CD4-positive, alpha-beta T cell (primary cell): ENCODE measurements at regions of chr1 and their contacts with region 1.

Region 1: GRCh38 chr1:148334339-148335130 is 148.6 kb downstream of the PPIAL4G start:
- DNase-seq: peak; percentile 52 to 89 (median 66)
- ATAC-seq: peak; percentile 75
- H3K4me3 ChIP-seq: peak overlapping the region; percentile 73
- H3K4me3 Mint-ChIP-seq: peak overlapping the region; percentile 95
- H3K27ac ChIP-seq: peak overlapping the region; percentile 50 to 66
- H3K27ac Mint-ChIP-seq: peak overlapping the region; percentile 96
- H3K4me1 ChIP-seq: peaks cover 16% of the 10 kb centered on the region
- H3K4me1 Mint-ChIP-seq: peaks cover 38% of the 10 kb centered on the region
- H3K27me3 ChIP-seq: peaks cover 6 to 9% of the 10 kb centered on the region in 2 experiments
- H3K27me3 Mint-ChIP-seq: peaks cover 6% of the 10 kb centered on the region
- CTCF ChIP-seq: no peak

Region 2: DNA sequence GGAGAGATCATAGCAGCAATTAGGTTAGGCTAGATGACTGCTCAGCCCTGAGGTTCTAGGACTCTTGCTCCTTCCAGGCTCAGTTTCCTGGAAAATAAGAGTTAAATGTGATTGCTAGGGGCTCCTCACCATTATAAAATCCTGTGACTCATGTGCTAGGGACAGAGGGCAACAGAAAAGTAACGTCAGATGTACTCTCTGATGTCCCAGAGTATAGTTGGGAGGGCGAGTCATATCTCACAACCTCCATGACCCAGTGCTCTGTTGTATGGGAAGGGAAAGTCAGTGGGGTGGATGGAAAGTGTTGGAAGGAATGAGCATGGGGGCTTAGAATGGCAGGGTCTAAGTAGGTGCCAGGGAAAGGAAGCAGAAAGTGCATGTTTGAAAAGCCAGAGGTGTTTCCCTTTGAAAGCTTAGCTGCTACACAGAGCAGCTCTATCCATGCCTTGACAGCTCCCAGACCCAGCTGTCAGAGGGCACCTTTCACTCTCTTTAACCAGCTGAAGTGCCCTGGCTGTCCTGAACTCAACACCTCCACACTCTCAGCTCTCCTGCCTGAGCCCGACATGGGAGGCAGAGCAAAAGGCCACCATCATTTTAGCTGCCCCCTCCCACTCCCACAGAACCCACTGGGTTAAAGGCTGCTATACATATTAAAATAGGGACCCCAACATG is 585.7 kb before region 1 on chr1:
- CTCF ChIA-PET with region 1: no interaction called
- POLR2A ChIA-PET with region 1: no interaction called
- intact Hi-C with region 1: no loop called
- DNase-seq: no peak
- ATAC-seq: no peak
- H3K4me3 ChIP-seq: no peak overlapping the region
- H3K4me3 Mint-ChIP-seq: no peak overlapping the region
- H3K27ac ChIP-seq: no peak overlapping the region
- H3K27ac Mint-ChIP-seq: no peak overlapping the region
- H3K4me1 ChIP-seq: no peaks in the 10 kb centered on the region
- H3K4me1 Mint-ChIP-seq: no peaks in the 10 kb centered on the region
- H3K27me3 ChIP-seq: peaks cover 0 to 7% of the 10 kb centered on the region in 2 experiments
- H3K27me3 Mint-ChIP-seq: no peaks in the 10 kb centered on the region
- CTCF ChIP-seq: no peak

Region 3: GRCh38 chr1:148263128-148263905 is 71.2 kb before region 1 on chr1:
- CTCF ChIA-PET with region 1: no interaction called
- POLR2A ChIA-PET with region 1: interaction called, 30 read pairs
- intact Hi-C with region 1: loop called in 1 of 2 experiments (anchors 5 kb)
- DNase-seq: peak; percentile 24 to 85 (median 43)
- ATAC-seq: peak; percentile 87
- H3K4me3 ChIP-seq: peak overlapping the region; percentile 75
- H3K4me3 Mint-ChIP-seq: peak overlapping the region; percentile 90
- H3K27ac ChIP-seq: peak overlapping the region; percentile 64 to 72
- H3K27ac Mint-ChIP-seq: peak overlapping the region; percentile 87
- H3K4me1 ChIP-seq: peaks cover 12% of the 10 kb centered on the region
- H3K4me1 Mint-ChIP-seq: peaks cover 15% of the 10 kb centered on the region
- H3K27me3 ChIP-seq: no peaks in the 10 kb centered on the region
- H3K27me3 Mint-ChIP-seq: no peaks in the 10 kb centered on the region
- CTCF ChIP-seq: no peak

Region 4: DNA sequence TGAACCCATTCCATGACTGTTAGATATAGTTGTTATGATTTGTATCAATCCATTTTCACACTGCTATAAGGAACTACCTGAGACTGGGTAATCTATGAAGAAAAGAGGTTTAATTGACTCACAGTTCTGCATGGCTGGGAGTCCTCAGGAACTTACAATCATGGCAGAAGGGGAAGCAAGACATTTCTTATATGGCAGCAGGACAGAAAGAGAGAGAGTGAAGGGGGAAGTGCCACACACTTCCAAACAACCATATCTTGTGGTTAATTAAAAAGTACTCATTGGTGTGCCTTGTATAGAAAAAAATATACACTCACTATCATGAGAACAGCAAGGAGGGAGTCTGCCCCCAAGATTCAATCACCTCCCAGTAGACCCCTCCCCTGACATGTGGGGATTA is 44.9 kb before region 1 on chr1:
- CTCF ChIA-PET with region 1: no interaction called
- POLR2A ChIA-PET with region 1: no interaction called
- intact Hi-C with region 1: loop called in 1 of 2 experiments (anchors 5 kb)
- DNase-seq: no peak
- ATAC-seq: no peak
- H3K4me3 ChIP-seq: no peak overlapping the region
- H3K4me3 Mint-ChIP-seq: no peak overlapping the region
- H3K27ac ChIP-seq: no peak overlapping the region
- H3K27ac Mint-ChIP-seq: no peak overlapping the region
- H3K4me1 ChIP-seq: no peaks in the 10 kb centered on the region
- H3K4me1 Mint-ChIP-seq: no peaks in the 10 kb centered on the region
- H3K27me3 ChIP-seq: peaks cover 0 to 5% of the 10 kb centered on the region in 2 experiments
- H3K27me3 Mint-ChIP-seq: peaks cover 9% of the 10 kb centered on the region
- CTCF ChIP-seq: no peak

Region 5: DNA sequence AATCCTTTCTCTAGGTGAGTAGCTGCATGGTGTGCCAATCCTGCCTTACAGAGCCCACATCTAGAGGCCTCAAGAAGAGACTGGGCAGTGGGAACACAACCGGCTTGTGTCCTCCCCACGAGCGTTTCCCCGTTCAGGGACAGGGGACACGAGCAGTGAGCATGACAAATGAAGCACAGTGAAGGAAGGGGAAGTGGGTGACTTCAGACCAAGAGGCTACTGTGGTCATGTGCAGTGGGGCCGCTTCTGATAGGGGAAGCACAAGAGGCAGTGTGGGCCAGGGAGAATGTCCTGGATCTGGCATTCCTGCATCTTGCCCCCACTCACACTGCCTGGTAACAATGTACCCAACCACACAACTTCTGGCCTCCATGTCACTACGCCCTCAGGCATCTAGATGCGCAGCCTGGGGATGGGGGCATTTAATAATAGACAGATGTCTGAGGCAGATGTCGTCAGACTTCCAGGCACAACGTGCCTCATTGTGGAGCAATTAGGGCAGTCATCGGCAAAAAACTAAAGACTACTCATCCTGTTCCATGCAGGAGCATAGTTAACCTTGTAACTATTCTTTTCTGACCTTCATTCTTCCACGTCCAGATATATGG is 26.8 kb before region 1 on chr1:
- CTCF ChIA-PET with region 1: interaction called, 3 read pairs
- POLR2A ChIA-PET with region 1: interaction called, 14 read pairs
- intact Hi-C with region 1: no loop called
- DNase-seq: peak in 2 of 14 experiments; percentile 50 to 51
- ATAC-seq: no peak
- H3K4me3 ChIP-seq: no peak overlapping the region
- H3K4me3 Mint-ChIP-seq: no peak overlapping the region
- H3K27ac ChIP-seq: no peak overlapping the region
- H3K27ac Mint-ChIP-seq: no peak overlapping the region
- H3K4me1 ChIP-seq: peaks cover 8% of the 10 kb centered on the region
- H3K4me1 Mint-ChIP-seq: peaks cover 17% of the 10 kb centered on the region
- H3K27me3 ChIP-seq: peaks cover 40 to 65% of the 10 kb centered on the region in 2 experiments
- H3K27me3 Mint-ChIP-seq: peaks cover 88% of the 10 kb centered on the region
- CTCF ChIP-seq: no peak

Region 6: DNA sequence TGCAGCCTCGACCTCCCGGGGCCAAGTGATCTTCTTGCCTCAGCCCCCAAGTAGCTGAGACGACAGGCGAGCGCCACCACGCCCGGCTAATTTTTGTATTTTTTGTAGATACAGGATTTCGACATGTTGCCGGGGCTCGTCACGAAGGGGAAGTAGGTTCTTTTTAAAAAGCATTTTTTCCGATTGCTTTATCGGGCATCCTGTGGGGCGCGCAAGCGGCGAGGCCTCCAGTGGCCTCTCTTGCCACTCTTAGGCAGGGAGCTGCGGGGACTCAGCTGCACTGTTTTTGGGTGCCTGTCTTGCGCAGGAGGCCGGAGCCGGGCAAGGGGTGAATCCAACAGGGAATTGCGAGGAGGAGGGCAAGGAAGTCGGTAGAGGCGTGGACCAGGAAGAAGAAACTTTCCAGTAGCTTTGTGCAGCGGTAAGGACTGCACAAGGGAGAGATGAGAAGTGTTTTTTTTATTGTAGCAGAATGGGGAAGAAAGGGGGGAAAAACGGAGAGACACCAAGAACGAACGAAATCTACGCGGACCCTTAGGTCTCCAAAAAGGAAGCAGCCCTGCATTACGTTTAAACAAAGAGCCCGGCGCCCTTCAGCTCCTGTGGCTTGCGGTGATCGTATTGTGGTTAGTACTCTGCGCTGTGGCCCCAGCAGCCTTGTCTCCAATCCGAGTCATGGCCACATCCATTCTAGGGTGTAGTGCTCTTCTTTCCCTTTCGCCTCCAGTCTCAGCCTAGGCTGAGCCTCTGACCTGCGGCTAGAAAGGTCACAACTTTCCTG is 16.2 kb before region 1 on chr1:
- CTCF ChIA-PET with region 1: interaction called, 3 read pairs
- POLR2A ChIA-PET with region 1: interaction called, 32 read pairs
- intact Hi-C with region 1: no loop called
- DNase-seq: peak; percentile 25 to 79 (median 40)
- ATAC-seq: peak; percentile 85
- H3K4me3 ChIP-seq: peak overlapping the region; percentile 67
- H3K4me3 Mint-ChIP-seq: peak overlapping the region; percentile 94
- H3K27ac ChIP-seq: no peak overlapping the region
- H3K27ac Mint-ChIP-seq: peak overlapping the region; percentile 29
- H3K4me1 ChIP-seq: peaks cover 16% of the 10 kb centered on the region
- H3K4me1 Mint-ChIP-seq: peaks cover 22% of the 10 kb centered on the region
- H3K27me3 ChIP-seq: peaks cover 0 to 6% of the 10 kb centered on the region in 2 experiments
- H3K27me3 Mint-ChIP-seq: peaks cover 33% of the 10 kb centered on the region
- CTCF ChIP-seq: no peak